BJ (cell line): ENCODE measurements at regions of chr1 and their contacts with region 1.

Region 1: DNA sequence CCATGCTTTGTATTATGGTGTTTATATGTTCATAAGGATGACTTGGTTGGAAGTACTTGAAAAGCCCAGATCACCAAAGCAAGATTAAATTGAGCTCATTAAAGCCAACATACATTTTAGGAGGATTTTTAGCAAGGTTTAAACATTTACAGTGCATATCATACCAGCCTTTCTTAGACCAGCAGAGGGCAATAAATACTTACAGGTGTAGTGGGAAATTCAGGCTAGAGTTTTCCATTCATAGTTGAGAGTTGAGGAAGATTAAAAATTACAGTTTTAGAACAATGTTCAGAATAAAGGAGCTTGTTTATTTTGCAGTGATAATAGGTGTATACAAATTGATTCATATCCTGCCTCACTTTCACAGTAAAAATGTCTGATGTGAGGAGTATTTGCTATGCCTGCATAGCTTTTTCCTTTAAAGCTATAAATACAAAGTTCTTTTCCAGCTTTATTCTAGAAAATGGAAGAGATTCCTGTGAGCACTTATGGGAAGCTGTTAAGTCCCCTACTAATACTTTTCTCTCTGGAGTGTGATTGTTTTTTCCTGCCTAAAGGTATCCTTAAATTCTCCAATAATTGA is 35.3 kb downstream of the DTL start:
- DNase-seq: no peak
- H3K4me3 ChIP-seq: no peak overlapping the region
- H3K27me3 ChIP-seq: no peaks in the 10 kb centered on the region
- CTCF ChIP-seq: peak; percentile 76

Region 2: DNA sequence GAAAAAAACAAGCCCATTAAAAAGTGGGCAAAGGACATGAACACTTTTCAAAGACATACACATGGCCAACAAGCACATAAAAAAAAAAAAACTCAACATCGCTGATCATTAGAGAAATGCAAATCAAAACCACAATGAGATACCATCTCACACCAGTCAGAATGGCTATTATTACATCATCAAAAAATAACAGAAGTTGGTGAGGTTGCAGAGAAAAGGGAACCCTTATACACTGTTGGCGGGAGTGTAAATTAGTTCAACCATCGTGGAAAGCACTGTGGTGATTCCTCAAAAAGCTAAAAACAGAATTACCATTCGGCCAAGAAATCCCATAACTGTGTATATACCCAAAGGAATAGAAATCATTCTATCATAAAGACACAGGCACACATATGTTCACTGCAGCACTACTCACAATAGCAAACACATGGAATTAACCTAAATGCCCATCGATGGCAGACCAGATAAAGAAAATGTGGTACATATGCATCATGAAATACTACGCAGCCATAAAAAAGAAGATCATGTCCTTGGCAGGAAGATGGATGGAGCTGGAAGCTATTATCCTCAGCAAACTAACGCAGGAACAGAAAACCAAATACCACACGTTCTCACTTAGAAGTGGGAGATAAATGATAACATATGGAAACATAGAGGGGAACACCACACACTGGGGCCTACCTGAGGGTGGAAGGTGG is 105.6 kb before region 1 on chr1:
- CTCF ChIA-PET with region 1: no interaction called
- POLR2A ChIA-PET with region 1: no interaction called
- DNase-seq: no peak
- H3K4me3 ChIP-seq: no peak overlapping the region
- H3K27me3 ChIP-seq: no peaks in the 10 kb centered on the region
- CTCF ChIP-seq: no peak

Region 3: DNA sequence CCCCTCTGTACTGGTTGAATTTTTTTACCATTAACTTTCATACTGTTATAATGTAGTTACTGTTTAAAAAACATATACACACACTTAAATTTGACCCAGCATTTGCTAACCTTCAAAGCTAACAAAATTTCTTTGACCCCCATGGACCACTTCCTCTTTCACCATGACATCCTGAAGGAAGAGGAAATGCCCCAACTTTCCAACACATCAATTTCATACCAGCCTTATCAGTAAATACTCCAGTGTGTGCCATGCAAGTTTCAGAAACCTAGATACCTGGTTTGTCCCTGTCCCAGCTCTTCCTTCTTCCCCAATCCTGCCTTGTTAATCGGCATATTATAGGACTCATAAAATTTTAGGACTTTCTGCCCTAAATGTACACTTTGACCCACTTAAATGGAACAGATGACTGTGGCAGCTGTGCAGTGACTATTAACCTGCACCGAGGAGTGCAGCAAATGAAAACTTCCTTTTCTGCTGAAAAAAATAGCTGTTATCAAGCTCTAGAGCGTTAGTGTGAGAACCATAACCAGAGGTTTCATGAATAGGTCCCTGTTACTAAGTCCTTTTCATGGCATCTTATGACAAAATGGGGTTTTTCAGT is 18.9 kb after region 1 on chr1:
- CTCF ChIA-PET with region 1: interaction called, 18 read pairs
- POLR2A ChIA-PET with region 1: no interaction called
- DNase-seq: no peak
- H3K4me3 ChIP-seq: no peak overlapping the region
- H3K27me3 ChIP-seq: no peaks in the 10 kb centered on the region
- CTCF ChIP-seq: no peak

Region 4: GRCh38 chr1:212284744-212285684 is 214.2 kb after region 1 on chr1 and contains the start of gene PPP2R5A:
- CTCF ChIA-PET with region 1: interaction called, 93 read pairs
- POLR2A ChIA-PET with region 1: no interaction called
- DNase-seq: peak; percentile 96
- H3K4me3 ChIP-seq: peak within 1 kb of the TSS; percentile 80
- H3K27me3 ChIP-seq: no peaks in the 10 kb centered on the region
- CTCF ChIP-seq: peak; percentile 21; the same call in 1 of the 2 replicates
- polyA plus RNA-seq, gene PPP2R5A: 10.2 and 18.3 TPM in 2 replicates

Region 5: DNA sequence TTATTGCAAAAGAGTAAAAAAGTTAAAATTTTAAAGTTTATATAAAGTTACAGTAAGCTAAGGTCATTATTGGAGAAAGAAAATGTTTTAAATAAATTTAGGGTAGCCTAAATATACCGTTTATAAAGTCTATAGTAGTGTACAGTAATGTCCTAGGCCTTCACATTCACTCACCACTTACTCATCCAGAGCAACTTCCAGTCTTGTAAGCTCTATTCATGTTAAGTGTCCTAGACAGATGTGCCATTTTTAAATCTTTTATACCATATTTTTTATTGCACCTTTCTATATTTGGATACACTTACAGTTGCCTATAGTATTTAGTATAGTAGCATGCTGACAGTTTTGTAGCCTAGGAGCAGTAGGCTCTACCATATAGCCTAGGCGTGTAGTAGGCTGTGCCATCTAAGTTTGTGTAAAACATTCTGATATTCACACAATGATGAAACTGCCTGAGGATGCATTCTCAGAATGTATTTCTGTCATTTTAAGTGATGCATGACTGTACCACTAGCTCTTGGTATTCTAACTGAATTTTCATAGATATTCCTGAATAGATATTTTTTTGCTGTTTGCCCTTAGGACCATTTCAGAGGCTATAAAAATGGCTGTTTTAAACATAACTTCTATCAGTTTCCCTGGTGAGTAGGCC is 241.2 kb after region 1 on chr1:
- CTCF ChIA-PET with region 1: interaction called, 21 read pairs
- POLR2A ChIA-PET with region 1: no interaction called
- DNase-seq: no peak
- H3K4me3 ChIP-seq: no peak overlapping the region
- H3K27me3 ChIP-seq: no peaks in the 10 kb centered on the region
- CTCF ChIP-seq: no peak

Region 6: DNA sequence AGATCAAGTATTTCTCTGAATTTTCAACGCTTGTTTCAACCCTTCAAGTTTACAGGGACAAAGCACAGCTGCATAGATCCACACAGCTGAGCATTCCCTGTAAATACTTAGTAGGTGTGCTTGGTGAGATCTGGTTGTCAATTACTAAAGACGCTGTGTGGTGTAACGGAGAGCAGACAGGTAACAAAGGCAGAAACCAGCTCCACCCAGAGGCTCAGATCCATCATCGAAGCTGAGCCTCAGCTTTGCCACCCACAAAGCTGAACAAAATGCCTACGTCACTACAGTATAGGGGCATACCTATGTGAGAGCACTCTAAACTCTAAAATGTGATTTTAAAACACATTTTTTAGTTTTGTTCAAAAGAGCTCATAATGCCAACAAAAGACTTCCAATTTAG is 305.2 kb after region 1 on chr1:
- CTCF ChIA-PET with region 1: interaction called, 24 read pairs
- POLR2A ChIA-PET with region 1: no interaction called
- DNase-seq: no peak
- H3K4me3 ChIP-seq: no peak overlapping the region
- H3K27me3 ChIP-seq: no peaks in the 10 kb centered on the region
- CTCF ChIP-seq: no peak

Region 7: GRCh38 chr1:212609701-212610468 is 539.1 kb after region 1 on chr1:
- CTCF ChIA-PET with region 1: no interaction called
- POLR2A ChIA-PET with region 1: no interaction called
- DNase-seq: no peak
- H3K4me3 ChIP-seq: peak overlapping the region; percentile 68
- H3K27me3 ChIP-seq: peaks cover 27% of the 10 kb centered on the region
- CTCF ChIP-seq: no peak